WTC11 (cell line): ENCODE measurements at regions of chr19 and their contacts with region 1.

Region 1: DNA sequence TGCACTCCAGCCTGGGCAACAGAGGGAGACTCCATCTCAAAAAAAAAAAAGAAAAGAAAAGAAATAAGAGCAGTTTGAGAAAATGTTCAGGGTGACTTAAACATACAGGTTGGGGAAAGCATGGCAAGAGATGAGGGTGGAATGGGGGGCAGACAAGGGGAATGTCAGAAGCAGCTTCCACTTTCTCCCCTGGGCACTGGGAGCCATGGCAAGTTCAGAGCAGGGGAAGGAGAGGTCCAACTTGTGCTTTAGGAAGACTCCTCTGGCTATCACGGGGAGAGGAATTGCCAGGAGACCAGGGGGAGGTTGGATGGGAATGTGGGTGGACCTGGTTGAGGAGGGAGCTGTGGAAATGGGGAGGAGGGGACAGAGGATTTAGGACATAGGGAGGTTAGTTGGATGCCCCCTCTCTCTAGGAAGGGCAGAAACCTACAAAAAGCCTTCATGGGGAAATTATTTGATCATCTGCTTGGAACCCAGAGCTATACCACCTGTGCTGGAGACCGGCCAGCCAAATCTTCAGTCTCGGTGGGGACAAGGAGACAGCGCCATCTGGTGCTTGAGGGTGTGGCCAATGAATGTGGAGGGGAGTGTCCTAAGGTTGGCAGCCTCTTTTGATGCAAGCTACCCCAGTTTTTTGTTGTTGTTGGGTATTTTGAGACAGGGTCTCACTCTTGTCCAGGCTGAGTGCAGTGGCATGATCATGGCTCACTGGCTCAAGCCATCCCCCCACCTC is 7.3 kb upstream of the STRN4 start:
- DNase-seq: peak; percentile 77
- ATAC-seq: peak; percentile 80
- H3K4me3 Mint-ChIP-seq: no peak overlapping the region
- H3K27ac Mint-ChIP-seq: no peak overlapping the region
- H3K4me1 Mint-ChIP-seq: 0 out of 2 replicates have a peak, but pooled peaks cover 2% of the 10 kb centered on the region
- H3K27me3 Mint-ChIP-seq: no peaks in the 10 kb centered on the region
- CTCF ChIP-seq: 0 out of 2 replicates have a peak, but pooled peaks have one; percentile 50

Region 2: GRCh38 chr19:46710687-46711086 is 42.9 kb before region 1 on chr19:
- CTCF ChIA-PET with region 1: interaction called, 15 read pairs
- POLR2A ChIA-PET with region 1: no interaction called
- DNase-seq: peak; percentile 83
- ATAC-seq: peak; percentile 81
- H3K4me3 Mint-ChIP-seq: no peak overlapping the region
- H3K27ac Mint-ChIP-seq: peak overlapping the region; percentile 95
- H3K4me1 Mint-ChIP-seq: peaks cover 16% of the 10 kb centered on the region
- H3K27me3 Mint-ChIP-seq: no peaks in the 10 kb centered on the region
- CTCF ChIP-seq: no peak

Region 3: DNA sequence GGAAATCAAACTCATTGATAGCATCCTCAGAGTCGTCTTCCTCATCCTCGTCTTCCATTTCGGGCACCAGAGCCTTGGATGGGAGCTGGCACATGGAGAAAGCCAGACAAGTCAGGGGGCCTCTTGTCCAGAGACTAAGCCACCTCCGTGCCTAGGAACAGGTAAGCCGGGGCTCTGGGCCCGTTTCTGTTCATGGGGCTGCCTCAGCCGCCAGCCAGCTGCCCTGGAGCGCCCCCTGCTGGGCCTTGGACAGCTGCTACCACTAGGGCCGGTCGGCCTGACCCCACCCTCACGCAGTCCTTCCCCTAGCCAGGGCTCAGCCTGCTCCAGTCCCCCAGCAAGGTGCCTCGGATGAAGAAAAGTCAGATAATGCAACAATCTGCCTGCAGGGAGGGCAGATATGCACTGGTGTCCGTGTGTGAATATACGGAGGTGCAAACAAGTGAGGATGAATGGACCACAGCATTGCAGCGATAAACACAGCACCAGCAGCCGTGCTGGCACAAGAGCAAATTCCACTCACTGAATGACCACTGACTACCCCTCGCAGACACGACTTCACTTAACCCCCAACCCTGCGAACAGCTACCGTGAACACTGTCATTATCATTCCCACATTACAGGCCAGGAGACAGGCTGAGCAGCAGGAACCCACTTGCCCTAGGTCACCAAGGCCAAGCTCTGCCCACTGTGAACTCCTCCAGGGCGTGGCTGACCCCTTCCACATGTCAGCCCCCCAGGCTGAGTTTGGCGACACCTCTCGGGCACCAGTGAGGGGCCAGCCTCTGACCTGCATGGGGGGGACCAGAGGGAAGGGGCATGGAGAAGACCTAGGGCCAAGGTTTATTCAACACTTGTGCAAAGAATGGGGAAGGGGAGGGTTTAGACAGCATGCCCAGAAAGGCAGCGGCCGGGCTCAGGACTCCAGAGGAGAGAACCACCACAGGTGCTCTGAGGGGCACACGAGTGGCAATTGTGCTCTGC is 24.6 kb before region 1 on chr19:
- CTCF ChIA-PET with region 1: interaction called, 17 read pairs
- POLR2A ChIA-PET with region 1: no interaction called
- DNase-seq: peak; percentile 80
- ATAC-seq: peak; percentile 87
- H3K4me3 Mint-ChIP-seq: no peak overlapping the region
- H3K27ac Mint-ChIP-seq: peak overlapping the region; percentile 59; the same call in 1 of the 2 replicates
- H3K4me1 Mint-ChIP-seq: peaks cover 14% of the 10 kb centered on the region
- H3K27me3 Mint-ChIP-seq: no peaks in the 10 kb centered on the region; the same call in 1 of the 2 replicates
- CTCF ChIP-seq: peak; percentile 79

Region 4: GRCh38 chr19:46766569-46767317 is 13.2 kb after region 1 on chr19:
- CTCF ChIA-PET with region 1: interaction called, 40 read pairs
- POLR2A ChIA-PET with region 1: interaction called, 4 read pairs
- DNase-seq: peak; percentile 78
- ATAC-seq: peak; percentile 93
- H3K4me3 Mint-ChIP-seq: no peak overlapping the region
- H3K27ac Mint-ChIP-seq: peak overlapping the region; percentile 83; the same call in 1 of the 2 replicates
- H3K4me1 Mint-ChIP-seq: no peaks in the 10 kb centered on the region; the same call in 1 of the 2 replicates
- H3K27me3 Mint-ChIP-seq: no peaks in the 10 kb centered on the region
- CTCF ChIP-seq: peak; percentile 71

Region 5: DNA sequence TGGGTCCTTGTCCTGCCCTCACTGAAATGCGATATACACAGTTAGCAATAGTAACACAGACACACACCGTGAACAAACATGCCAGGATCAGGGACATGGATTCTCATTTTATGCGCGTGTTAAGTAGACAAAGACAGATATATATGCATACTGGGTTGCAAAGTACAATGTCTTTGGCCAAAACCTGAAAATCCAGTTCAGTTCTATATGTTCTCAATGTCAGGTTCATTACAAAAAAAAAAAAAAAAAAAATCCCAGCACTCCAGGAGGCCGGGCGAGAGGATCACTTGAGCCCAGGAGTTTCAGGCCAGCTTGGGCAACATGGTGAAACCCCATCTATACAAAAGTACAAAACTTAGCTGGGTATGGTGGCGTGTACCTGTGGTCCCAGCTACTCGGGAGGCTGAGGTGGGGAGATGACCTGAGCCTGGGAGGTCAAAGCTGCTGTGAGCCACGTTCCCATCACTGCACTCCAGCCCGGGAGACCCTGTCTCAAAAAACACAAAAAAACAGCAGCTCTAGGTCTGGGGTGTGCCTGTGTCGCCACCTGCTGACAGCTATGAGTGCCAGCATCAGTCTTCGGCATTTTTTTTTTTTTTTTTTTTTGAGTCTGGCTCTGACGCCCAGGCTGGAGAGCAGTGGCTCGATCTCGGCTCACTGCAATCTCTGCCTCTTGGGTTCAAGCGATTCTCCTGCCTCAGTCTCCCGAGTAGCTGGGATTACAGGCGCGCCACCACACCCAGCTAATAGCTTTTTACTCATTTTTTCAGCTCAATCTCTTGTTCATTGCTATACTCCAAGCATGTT is 86.8 kb after region 1 on chr19:
- CTCF ChIA-PET with region 1: interaction called, 33 read pairs
- POLR2A ChIA-PET with region 1: interaction called, 6 read pairs
- DNase-seq: peak; percentile 66
- ATAC-seq: peak; percentile 86
- H3K4me3 Mint-ChIP-seq: no peak overlapping the region
- H3K27ac Mint-ChIP-seq: peak overlapping the region; percentile 68
- H3K4me1 Mint-ChIP-seq: no peaks in the 10 kb centered on the region
- H3K27me3 Mint-ChIP-seq: no peaks in the 10 kb centered on the region
- CTCF ChIP-seq: peak; percentile 39; the same call in 1 of the 2 replicates